Dorsolateral prefrontal cortex (tissue), 120 donors: ENCODE measurements at regions of chr22 and their contacts with region 1.

Region 1: GRCh38 chr22:49305214-49305909 is 522.3 kb downstream of the BRD1 start:
- DNase-seq: peak; percentile 57 to 90 (median 76)
- H3K4me3 ChIP-seq: peak overlapping the region in 49 of 59 donors; percentile 7 to 61 (median 38)
- H3K27ac ChIP-seq: no peak overlapping the region
- H3K27me3 ChIP-seq: peaks cover 0 to 18% (median 0%) of the 10 kb centered on the region in 45 donors
- CTCF ChIP-seq: peak; percentile 85 to 100 (median 98)

Region 2: DNA sequence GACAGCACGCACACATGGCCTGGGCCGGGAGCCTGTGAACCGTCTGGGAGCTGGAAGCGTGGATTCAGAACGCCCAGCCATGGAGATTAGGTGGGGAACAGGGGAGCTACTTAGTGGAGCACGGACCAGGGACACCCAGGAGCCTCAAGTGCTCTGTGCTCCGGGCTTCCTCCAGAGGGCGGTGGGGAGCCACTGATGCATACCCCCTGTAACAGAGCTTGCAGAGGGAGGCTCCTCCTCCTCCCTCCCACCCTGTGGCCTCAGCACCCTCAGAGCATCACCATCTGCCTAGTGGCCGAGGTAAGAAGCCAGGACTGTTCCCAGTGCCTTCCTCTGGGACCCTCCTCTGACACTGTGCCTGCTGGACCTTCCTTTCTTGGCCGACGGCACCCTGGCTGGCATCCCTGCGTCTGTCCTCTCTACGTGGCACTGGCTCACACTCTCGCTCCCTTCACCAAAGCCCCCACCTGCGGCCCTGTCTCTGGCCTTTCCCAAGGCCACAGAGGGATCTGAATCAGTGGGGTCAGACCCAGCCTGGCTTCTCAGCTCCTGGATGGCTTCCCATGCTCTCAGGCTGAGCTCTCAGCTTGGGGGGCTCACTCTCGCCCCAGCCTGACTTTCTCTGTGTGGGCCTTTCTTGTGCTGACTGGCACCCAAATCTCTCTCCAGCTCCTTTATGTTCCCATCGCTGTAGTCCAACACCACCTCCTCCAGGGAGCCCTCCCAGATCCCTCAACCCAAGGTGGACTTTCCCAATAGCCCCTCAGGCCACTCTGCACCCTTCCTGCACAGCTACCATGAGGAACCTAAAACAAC is 258.6 kb before region 1 on chr22:
- intact Hi-C with region 1: loop called (anchors 2 to 5 kb)
- DNase-seq: peak in 9 of 10 donors; percentile 38 to 73 (median 62)
- H3K4me3 ChIP-seq: no peak overlapping the region
- H3K27ac ChIP-seq: peak overlapping the region in 6 of 59 donors; percentile 11 to 51 (median 36)
- H3K27me3 ChIP-seq: peaks cover 0 to 23% (median 0%) of the 10 kb centered on the region in 45 donors
- CTCF ChIP-seq: peak in 54 of 56 donors; percentile 12 to 74 (median 62)

Region 3: DNA sequence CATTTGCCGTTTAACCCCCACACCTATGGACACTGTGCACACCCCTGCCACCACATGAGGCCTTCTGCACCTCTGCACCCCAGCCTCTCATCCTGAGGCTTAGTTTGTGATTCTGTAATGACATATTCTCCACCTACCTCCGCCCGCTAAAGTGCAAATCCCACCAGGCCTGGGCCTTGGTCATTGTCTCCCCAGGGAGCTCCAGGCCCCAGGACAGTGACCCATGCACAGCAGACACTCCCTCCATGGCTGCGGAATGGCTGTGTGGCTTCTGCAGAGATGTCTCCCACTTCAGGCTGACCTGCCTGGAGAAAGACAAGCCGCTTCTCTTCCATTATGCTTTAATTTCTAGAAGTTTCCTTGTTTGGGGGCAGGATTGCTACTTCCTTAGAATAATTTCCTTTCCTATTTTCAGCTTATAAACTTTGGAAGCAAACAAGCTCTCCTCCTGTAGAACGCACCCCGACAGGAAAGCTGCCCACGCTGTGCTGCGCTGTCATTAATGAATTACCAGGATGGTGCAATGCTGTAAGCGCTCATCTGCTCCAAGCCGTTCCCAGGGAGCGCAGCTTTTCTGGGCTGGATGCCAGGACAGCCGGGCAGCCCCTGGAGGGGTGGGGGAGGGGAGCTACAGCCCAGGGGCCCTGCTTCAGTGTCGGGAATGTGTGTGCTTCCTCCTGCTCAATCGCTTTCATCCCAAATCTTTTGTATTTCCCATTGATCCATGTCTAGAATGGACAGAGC is 95.7 kb before region 1 on chr22:
- intact Hi-C with region 1: no loop called
- DNase-seq: peak in 8 of 10 donors; percentile 15 to 52 (median 28)
- H3K4me3 ChIP-seq: no peak overlapping the region
- H3K27ac ChIP-seq: no peak overlapping the region
- H3K27me3 ChIP-seq: peaks cover 0 to 38% (median 6%) of the 10 kb centered on the region in 45 donors
- CTCF ChIP-seq: no peak

Region 4: DNA sequence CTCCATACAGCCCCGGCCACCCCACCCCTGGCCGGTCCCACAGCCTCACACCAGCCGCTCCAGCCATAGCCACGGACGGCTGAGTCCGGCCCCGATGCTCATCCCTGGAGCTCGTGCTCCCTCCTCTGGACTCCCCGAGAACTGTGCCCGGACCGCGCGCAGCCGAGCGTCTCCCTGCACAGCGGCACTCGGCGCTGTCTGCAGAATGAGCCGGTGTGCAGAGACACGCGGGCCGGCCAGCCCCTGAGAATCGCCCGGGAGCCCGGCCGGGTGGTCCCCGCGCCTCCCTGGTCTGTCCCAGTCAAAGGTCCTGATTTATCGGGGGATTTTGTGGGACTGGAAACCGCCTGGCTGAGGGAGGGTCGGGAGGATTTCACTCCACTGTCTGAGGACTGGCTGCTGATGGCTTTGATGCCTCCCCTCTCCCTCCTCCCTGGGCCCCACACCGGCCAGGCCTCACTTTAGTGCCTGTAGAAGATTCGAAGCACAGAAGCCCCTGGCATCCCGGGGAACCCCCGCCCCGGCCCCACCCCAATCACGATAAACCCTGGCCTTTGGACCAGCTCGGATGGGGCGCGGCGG is 419.6 kb after region 1 on chr22:
- intact Hi-C with region 1: loop called in 1 of 2 experiments (anchors 5 kb)
- DNase-seq: peak; percentile 45 to 83 (median 70)
- H3K4me3 ChIP-seq: peak overlapping the region in 57 of 59 donors; percentile 9 to 64 (median 44)
- H3K27ac ChIP-seq: no peak overlapping the region
- H3K27me3 ChIP-seq: peaks cover 0 to 54% (median 21%) of the 10 kb centered on the region in 45 donors
- CTCF ChIP-seq: peak in 54 of 56 donors; percentile 56 to 83 (median 74)

Region 5: DNA sequence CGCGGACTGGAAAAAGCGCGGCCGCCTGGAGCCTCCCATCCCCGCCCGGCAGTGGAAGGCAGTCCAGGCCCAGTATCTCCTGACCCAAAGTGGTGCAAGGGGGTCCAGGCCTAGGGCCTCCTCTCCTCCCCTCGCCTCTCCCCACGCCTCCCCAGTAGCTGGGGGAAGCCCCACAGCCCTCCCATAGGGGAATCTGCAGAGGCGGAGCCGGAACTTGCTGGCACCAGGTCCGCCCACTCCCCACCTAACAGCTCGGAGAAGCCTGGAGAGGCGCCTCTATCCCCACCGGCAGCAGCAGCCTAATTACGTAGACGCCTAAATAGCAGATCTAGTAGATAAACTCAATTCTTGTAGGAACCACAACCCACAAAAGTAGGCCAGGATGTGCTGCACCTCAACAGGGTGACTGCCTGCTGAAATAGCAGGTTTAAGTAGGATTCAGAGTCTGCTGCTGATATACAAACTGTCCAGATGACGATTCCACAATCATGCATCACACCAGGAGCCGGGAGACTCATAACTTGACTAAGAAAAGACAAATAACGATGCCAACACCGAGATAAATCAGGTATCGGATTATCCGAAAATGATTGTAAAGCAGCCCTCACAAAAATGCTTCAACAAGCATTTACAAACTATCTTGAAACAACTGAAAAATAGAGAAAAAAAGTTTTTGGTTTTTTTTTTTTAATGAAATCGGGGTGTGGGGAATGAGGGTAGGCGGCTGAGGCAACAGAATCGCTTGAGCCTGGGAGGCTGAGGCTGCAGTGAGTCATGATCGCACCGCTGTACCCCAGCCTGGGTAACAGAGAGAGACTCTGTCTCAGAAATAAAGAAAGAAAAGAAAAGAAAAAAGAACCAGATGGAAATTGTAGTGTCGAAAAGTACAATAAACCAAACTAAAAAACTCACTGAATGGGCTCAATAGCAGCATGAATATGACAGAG is 533.7 kb after region 1 on chr22:
- intact Hi-C with region 1: no loop called
- DNase-seq: no peak
- H3K4me3 ChIP-seq: no peak overlapping the region
- H3K27ac ChIP-seq: no peak overlapping the region
- H3K27me3 ChIP-seq: no peaks in the 10 kb centered on the region
- CTCF ChIP-seq: no peak